RWPE1 (cell line): ENCODE measurements at regions of chr20 and their contacts with region 1.

Region 1: DNA sequence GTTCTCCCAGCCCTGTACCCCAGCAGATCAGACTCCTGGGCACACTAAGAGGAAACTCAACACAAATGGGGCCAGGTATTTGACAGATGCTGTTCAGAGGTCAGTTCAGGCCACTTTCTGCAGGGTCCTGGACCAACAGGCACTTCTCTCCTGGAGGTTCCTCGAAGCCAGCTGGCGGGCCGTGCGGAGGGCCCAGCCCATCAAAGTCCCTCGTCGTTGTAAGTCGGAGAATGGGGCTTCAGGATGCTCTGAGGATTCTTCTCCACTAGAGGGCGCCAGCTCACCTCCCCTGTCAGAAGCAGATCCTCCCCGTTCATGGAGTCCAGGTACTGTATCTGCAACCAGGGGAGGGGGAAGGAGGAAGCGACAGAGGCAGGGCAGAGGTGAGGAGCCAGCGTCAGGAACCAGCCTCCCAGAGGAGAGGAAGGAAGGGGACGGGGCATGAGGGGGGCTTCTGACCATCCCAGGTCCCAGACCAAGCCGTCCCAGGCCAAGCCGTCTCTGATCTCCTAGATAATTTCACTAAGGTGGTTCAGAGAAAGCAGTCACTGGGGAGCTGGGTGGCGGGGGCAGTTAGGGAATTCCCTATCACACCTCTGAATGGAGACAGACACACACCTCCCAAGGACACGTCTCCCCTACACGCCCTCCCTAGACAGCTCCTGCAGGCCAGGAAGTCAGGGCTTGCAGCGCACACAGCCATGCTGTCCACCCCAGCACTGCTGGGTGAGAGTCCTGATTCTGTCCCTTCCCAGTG is 11.7 kb upstream of the FAM83C start:
- DNase-seq: peak; percentile 92
- H3K27ac ChIP-seq: peak overlapping the region; percentile 100
- CTCF ChIP-seq: peak; percentile 100

Region 2: GRCh38 chr20:35293303-35294292 is 10.3 kb before region 1 on chr20:
- CTCF ChIA-PET with region 1: interaction called, 12 read pairs
- POLR2A ChIA-PET with region 1: no interaction called
- DNase-seq: no peak
- H3K27ac ChIP-seq: no peak overlapping the region
- CTCF ChIP-seq: no peak

Region 3: GRCh38 chr20:35329435-35330139 is 25.7 kb after region 1 on chr20:
- CTCF ChIA-PET with region 1: interaction called, 52 read pairs
- POLR2A ChIA-PET with region 1: interaction called, 4 read pairs
- DNase-seq: peak; percentile 78
- H3K27ac ChIP-seq: peak overlapping the region; percentile 3; the same call in 1 of the 2 replicates
- CTCF ChIP-seq: no peak

Region 4: GRCh38 chr20:35437491-35437998 is 133.6 kb after region 1 on chr20:
- CTCF ChIA-PET with region 1: interaction called, 49 read pairs
- POLR2A ChIA-PET with region 1: no interaction called
- DNase-seq: no peak
- H3K27ac ChIP-seq: peak overlapping the region; percentile 53
- CTCF ChIP-seq: no peak

Region 5: DNA sequence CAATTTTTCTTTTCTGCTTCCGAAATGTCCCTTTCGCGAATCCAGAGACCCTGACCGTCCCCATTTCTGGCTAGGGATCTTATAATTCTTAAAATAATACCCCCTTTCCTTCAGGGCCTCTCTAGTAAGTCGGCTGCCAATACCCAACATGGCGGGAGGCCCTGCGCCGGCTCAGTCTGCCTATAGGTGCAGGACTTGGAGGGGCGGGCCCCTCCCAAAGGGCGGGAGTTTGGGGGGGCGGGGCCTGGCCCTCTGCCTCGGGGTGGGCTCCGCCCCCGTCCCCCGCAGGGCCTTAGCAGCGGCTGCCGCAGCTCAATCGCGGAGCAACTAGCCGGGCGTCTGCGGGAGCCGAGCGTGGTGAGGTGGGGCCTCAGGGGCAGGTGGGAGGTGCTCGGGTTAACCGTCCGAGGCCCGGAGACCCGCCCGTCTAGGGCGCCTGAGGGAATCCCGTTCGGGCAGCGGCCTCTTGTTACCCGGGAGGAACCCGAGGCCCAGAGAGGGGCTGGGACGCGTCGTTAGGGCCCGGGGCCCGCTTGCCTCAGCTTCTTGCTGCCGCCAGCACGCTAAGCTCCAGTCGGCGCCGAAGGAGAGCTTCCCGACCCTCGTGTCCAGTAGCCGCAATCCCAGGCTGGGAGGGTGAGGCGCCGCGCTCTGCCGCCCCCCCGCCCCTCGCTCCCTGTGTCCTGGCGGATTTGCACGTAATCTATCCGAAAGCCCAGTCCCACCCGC is 151.1 kb after region 1 on chr20 and contains the start of gene CEP250:
- CTCF ChIA-PET with region 1: interaction called, 36 read pairs
- POLR2A ChIA-PET with region 1: interaction called, 4 read pairs
- DNase-seq: peak; percentile 99
- H3K27ac ChIP-seq: peak within 1 kb of the TSS; percentile 95
- CTCF ChIP-seq: no peak